ENCODE measurements at regions of chr15 and their contacts with region 1.

Region 1: DNA sequence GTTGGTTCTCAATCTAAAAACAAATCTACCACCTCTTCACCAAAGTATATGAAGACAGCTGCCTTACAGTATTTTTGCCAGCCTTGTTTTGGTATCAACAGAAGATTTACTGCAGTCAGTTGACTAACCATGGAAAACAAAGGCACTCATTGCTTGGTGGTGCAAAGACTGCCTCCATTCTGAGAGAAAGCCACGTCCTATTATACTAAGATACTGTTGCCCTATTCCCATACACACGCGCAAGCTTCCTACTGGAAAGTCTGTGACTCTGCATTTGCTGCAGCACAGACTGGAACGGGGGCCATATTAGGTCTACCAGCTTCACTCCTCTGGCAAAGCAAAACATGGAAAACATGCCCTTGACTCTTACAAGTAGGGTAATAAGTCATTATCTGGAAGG is 18.0 kb downstream of the MTMR10 start:
- DNase-seq: no peak
- ATAC-seq: no peak
- H3K4me3 ChIP-seq: no peak overlapping the region
- H3K27ac ChIP-seq: no peak overlapping the region
- H3K4me1 ChIP-seq: peaks cover 14% of the 10 kb centered on the region; the same call in 1 of the 2 replicates
- H3K27me3 ChIP-seq: no peaks in the 10 kb centered on the region
- CTCF ChIP-seq: no peak
- EP300 ChIP-seq: no peak
- POLR2A ChIP-seq: no peak
- RAD21 ChIP-seq: no peak

Region 2: DNA sequence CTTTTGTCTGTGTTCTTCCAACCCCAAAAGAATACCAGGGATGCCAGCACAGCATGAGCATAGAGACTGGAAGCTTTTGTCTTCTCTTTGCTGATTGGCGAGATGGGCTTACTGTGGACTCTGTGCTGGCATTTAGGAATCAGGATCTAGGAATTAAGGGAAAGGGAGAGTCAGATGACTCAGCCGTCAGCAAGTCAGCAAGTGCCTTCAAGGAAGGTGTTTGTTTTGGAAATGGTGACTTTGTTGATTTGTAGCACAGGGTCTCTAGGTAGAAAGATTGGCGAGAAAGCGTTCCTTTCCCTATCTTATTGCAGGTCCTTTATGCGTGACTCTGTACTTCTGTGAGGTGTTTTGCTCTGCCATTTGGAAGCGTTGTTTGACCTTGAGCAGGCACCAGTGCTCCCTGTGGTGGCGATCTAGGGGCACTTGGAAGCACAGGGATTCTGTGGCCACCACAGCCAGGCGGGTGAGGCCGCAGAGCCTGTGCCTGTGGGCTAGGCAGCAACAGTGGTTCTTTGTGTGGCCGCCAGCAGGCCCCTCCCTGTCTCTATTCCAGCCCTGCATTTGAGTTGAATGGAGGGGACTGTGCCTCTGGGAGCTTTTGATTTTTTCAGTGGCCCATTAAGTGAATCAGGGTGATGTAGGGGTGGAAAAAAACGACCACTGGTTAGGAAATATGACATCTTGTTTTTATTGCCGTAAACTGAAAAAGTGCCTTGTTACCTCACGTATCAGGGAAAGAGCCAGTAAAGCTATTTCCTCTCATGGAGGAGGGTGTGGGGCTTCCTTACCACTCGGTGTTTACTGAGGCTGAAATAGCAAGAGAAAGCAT is 50.7 kb before region 1 on chr15:
- CTCF ChIA-PET with region 1: no interaction called
- POLR2A ChIA-PET with region 1: no interaction called
- RAD21 ChIA-PET with region 1: no interaction called
- SMC1A ChIA-PET with region 1: no interaction called
- in situ Hi-C with region 1: no loop called
- intact Hi-C with region 1: loop called (anchors 5 kb)
- DNase-seq: no peak
- ATAC-seq: no peak
- H3K4me3 ChIP-seq: no peak overlapping the region
- H3K27ac ChIP-seq: no peak overlapping the region
- H3K4me1 ChIP-seq: peaks cover 19% of the 10 kb centered on the region
- H3K27me3 ChIP-seq: no peaks in the 10 kb centered on the region
- CTCF ChIP-seq: no peak
- EP300 ChIP-seq: no peak
- POLR2A ChIP-seq: no peak
- RAD21 ChIP-seq: no peak

Region 3: GRCh38 chr15:30985081-30985531 is 11.7 kb after region 1 on chr15:
- CTCF ChIA-PET with region 1: interaction called, 4 read pairs
- POLR2A ChIA-PET with region 1: no interaction called
- RAD21 ChIA-PET with region 1: no interaction called
- SMC1A ChIA-PET with region 1: interaction called, 22 read pairs
- in situ Hi-C with region 1: no loop called
- intact Hi-C with region 1: no loop called
- DNase-seq: no peak
- ATAC-seq: peak; percentile 59
- H3K4me3 ChIP-seq: peak overlapping the region; percentile 14; the same call in 1 of the 2 replicates
- H3K27ac ChIP-seq: peak overlapping the region; percentile 20; the same call in 1 of the 2 replicates
- H3K4me1 ChIP-seq: peaks cover 16% of the 10 kb centered on the region
- H3K27me3 ChIP-seq: no peaks in the 10 kb centered on the region
- CTCF ChIP-seq: no peak
- EP300 ChIP-seq: no peak
- POLR2A ChIP-seq: no peak
- RAD21 ChIP-seq: no peak

Measured in GM12878 (cell line).